Head of caudate nucleus (tissue), 42 donors: ENCODE measurements at regions of chr4 and their contacts with region 1.

Region 1: GRCh38 chr4:145732895-145733880 is 53.2 kb downstream of the C4orf51 start:
- DNase-seq: peak; percentile 84 to 98 (median 95)

Region 2: GRCh38 chr4:145618932-145619638 is 114.1 kb before region 1 on chr4 and contains the start of gene MMAA:
- intact Hi-C with region 1: loop called (anchors 10 kb)
- DNase-seq: peak; percentile 81 to 98 (median 95)

Region 3: GRCh38 chr4:145773581-145774234 is 40.5 kb after region 1 on chr4:
- intact Hi-C with region 1: no loop called
- DNase-seq: peak in 2 of 42 donors; percentile 15 to 39